K562 (cell line): ENCODE measurements at regions of chr19 and their contacts with region 1.

Region 1: DNA sequence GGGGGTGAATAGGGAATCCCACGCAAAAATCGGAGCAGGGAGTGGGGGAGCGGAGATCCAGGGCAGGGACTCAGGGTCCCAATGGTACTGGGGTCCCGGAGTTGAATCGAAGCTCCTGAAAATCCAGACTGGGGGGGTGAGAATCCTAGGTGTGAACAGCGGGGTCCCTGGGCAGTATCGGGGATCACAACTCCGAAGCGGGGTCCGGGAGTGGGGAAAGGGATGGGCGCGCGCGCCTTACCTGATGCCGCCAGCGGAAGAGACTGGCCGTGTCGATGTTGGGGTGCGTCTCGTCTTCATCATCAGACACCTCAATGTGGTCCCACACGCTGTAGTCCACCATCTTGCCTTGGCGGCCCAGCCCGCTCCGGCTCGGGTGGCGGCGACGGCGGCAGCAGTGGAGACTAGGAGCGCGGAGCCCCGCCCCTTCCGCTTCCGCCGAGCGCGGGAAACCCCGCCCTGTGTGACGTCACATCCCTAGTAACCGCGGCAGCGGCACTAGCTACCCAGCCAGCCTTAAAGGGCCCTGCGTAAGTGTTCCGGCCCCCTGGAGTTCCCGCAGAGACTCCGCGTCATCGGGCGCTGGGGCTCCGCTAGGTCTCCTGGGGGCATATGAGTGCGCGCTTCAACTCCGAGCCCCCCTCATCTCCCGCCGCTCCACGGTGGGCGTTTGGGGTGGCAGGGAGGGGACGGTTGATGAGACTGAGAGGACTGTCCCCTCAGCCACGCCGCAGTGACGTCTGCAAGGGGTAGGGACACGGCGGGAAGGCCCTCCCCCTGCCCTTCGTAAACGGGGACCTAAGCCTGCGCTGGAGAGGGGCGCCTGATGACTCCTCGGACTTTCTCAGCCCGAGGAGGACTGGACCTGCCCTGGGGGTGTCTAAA is at the start of gene CDC37:
- DNase-seq: peak; percentile 94 to 97 (median 96)
- ATAC-seq: peak; percentile 87
- H3K4me3 ChIP-seq: peak within 1 kb of the TSS; percentile 99
- H3K27ac ChIP-seq: peak within 1 kb of the TSS; percentile 76
- H3K4me1 ChIP-seq: peaks cover 18 to 50% of the 10 kb centered on the region in 2 experiments
- H3K27me3 ChIP-seq: no peaks in the 10 kb centered on the region
- CTCF ChIP-seq: no peak
- EP300 ChIP-seq: no peak
- POLR2A ChIP-seq: peak; percentile 90
- RAD21 ChIP-seq: no peak
- polyA plus RNA-seq, gene CDC37: 6.6 to 12.8 TPM

Region 2: GRCh38 chr19:10388957-10389356 is 14.4 kb before region 1 on chr19:
- CTCF ChIA-PET with region 1: no interaction called
- POLR2A ChIA-PET with region 1: interaction called, 13 read pairs
- in situ Hi-C with region 1: no loop called
- intact Hi-C with region 1: no loop called
- DNase-seq: peak; percentile 57 to 91 (median 68)
- ATAC-seq: peak; percentile 84
- H3K4me3 ChIP-seq: no peak overlapping the region
- H3K27ac ChIP-seq: no peak overlapping the region
- H3K4me1 ChIP-seq: peaks cover 0 to 6% of the 10 kb centered on the region in 2 experiments; a peak in 2 of 5 replicates
- H3K27me3 ChIP-seq: no peaks in the 10 kb centered on the region
- CTCF ChIP-seq: peak; percentile 92 to 95 (median 94)
- EP300 ChIP-seq: no peak
- POLR2A ChIP-seq: peak; percentile 56
- RAD21 ChIP-seq: peak; percentile 92 to 96

Region 3: DNA sequence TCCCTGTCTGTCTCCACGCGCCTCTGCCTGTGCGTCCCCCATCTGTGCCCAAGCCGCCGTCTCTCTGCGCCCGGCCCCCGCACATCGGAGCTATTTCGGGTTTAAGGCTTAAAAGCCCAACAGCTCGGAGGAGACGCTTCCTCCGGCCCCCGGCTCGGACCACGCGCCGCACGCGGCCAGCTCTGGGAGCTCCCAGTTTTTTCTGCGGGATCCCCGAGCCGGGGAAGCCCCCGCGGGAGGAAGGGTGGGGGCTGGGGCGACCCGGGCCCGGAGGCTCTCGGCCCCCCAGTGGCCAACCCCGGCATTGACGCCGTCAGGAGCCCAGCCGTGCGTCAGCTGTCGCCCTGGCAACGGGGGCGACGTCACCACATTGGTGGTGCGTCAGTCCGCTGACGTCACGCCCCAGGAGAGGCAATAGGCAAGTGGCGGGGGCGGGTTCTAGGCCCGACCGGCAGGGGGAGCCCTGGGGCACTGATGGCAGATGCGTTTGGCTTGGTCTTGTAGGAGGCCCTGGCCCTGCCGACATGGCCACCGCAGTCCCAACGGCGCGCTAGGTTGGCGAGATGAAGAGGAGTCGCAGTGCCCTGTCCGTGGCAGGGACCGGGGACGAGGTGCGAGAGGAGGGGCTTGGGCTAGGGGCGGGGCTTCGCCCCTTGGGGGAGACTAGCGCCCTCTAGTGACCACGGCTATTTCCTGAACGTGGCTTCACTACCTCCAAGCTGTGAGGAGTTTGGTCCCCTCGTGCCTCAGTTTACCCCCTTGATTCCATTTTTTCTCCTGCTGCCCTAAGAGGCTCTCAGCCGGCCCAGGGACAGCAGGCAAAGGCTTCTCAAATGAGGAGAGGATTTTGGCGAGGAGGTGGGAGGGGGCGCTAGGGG is 13.2 kb after region 1 on chr19:
- CTCF ChIA-PET with region 1: interaction called, 10 read pairs
- POLR2A ChIA-PET with region 1: interaction called, 9 read pairs
- in situ Hi-C with region 1: no loop called
- intact Hi-C with region 1: no loop called
- DNase-seq: peak; percentile 89 to 97 (median 92)
- ATAC-seq: peak; percentile 61
- H3K4me3 ChIP-seq: peak overlapping the region; percentile 58
- H3K27ac ChIP-seq: peak overlapping the region; percentile 95
- H3K4me1 ChIP-seq: peaks cover 32 to 62% of the 10 kb centered on the region in 2 experiments
- H3K27me3 ChIP-seq: no peaks in the 10 kb centered on the region
- CTCF ChIP-seq: peak; percentile 80 to 99 (median 89)
- EP300 ChIP-seq: peak; percentile 40; the same call in 1 of the 2 replicates
- POLR2A ChIP-seq: peak; percentile 67; the same call in 1 of the 2 replicates
- RAD21 ChIP-seq: peak; percentile 12 to 47; a peak in 3 of 4 replicates

Region 4: GRCh38 chr19:10431943-10432735 is 28.8 kb after region 1 on chr19:
- CTCF ChIA-PET with region 1: interaction called, 11 read pairs
- POLR2A ChIA-PET with region 1: interaction called, 3 read pairs
- in situ Hi-C with region 1: no loop called
- intact Hi-C with region 1: loop called (anchors 1 kb)
- DNase-seq: peak; percentile 87 to 90 (median 88)
- ATAC-seq: peak; percentile 85
- H3K4me3 ChIP-seq: peak overlapping the region; percentile 64
- H3K27ac ChIP-seq: peak overlapping the region; percentile 80
- H3K4me1 ChIP-seq: peaks cover 16 to 50% of the 10 kb centered on the region in 2 experiments; a peak in 4 of 5 replicates
- H3K27me3 ChIP-seq: no peaks in the 10 kb centered on the region
- CTCF ChIP-seq: no peak; a peak in 2 of 6 replicates
- EP300 ChIP-seq: no peak
- POLR2A ChIP-seq: no peak
- RAD21 ChIP-seq: no peak

Region 5: DNA sequence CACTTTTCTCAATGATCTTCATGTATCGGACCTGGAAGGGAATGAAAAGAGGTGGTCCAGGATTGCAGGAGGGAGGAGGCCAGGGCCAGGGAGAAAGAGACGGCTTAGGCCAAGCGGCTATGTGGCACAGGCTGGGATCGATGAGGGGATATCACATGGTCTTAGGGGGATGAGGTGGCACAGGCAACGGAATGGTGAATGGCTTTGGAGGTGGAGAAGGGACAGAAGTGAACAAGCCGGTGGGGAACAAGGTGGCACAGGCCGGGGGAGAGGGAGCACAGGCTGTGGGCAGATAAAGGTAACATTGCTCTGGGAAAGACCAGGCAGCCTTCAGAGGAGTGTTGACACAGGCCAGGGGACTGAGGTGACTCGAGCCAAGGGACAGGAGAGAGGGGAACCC is 171.1 kb after region 1 on chr19:
- CTCF ChIA-PET with region 1: no interaction called
- POLR2A ChIA-PET with region 1: interaction called, 4 read pairs
- in situ Hi-C with region 1: loop called (anchors 5 kb)
- intact Hi-C with region 1: loop called (anchors 5 kb)
- DNase-seq: no peak
- ATAC-seq: no peak
- H3K4me3 ChIP-seq: no peak overlapping the region
- H3K27ac ChIP-seq: no peak overlapping the region
- H3K4me1 ChIP-seq: peaks cover 10 to 24% of the 10 kb centered on the region in 2 experiments; a peak in 4 of 5 replicates
- H3K27me3 ChIP-seq: no peaks in the 10 kb centered on the region
- CTCF ChIP-seq: no peak
- EP300 ChIP-seq: no peak
- POLR2A ChIP-seq: no peak
- RAD21 ChIP-seq: no peak